Left ventricle myocardium superior (tissue), 1 donor: ENCODE measurements at regions of chr10 and their contacts with region 1.

Region 1: GRCh38 chr10:110600487-110601101 is 33.1 kb downstream of the SMC3 start:
- DNase-seq: no peak
- ATAC-seq: no peak

Region 2: DNA sequence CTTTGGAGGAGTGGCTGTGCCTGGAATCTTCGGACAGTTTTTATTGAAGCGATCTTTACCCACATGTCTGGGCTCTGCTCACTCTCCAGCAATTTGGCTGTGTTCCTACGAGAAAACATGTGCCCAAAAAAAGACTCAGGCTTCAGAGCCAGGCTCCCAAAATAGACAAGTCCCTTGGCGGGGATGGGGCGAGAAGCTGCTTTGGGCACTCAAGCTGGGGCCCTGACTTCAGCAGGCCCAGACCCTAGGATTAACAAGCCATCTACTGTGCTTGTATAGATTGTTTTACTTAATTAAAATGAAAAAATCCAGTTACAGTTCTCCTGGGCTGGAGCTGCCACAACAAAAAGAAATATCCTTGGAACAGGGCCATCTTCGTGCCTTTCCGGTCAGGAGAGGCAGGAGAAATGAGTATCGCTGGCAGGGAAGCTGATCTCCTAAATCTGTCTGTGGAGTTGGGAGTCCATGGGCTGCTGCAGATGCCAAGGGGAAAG is 219.8 kb after region 1 on chr10:
- intact Hi-C with region 1: no loop called
- DNase-seq: peak; percentile 73
- ATAC-seq: peak; percentile 71

Region 3: GRCh38 chr10:110883924-110884323 is 283.3 kb after region 1 on chr10:
- intact Hi-C with region 1: loop called (anchors 10 kb)
- DNase-seq: no peak
- ATAC-seq: no peak